Activated T-helper 2 cell treated with anti-CD3 and anti-CD28 coated beads, Interferon-gamma antibody, Interleukin-2, Interleukin-4, amounts not matched to agents 10 μg/mL and 5 μg/mL and 100 μg/mL, durations not matched to agents 14 hours and 24 hours and 36 hours (primary cell): ENCODE measurements at regions of chr2 and their contacts with region 1.

Region 1: DNA sequence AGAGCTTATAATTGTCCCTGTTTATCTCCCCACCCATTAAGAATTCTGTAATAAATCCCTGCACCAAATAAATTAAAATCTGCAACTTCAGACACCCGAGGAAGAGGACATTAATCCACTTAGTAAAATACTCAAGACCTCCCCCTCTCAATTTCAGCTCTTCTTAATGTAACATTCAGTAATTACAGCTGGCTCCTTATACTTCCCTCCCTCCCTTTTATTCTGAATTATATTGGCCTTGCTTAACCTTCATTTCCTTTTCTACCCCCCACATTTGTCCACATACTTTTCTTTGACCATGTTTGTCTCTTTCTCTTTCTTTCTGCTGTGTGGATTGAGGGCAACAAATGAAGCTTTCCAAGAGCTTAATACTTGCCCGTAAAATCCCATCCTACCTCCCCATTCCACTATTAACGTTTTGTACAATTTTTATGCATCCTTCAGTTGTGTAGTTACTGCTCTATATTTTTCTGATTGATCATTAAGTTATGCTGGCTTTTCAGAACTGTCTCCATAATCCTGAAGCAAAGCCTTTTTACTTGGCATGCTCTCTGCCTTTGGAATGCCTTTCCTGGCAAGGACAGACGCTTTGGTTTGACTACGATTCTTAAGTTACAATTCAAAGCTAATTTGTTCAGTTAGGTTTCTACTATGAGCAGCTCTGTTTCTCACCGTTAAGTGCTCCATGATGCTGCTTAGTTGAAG is 580.1 kb downstream of the ZEB2 start:
- DNase-seq: no peak
- H3K4me3 Mint-ChIP-seq: no peak overlapping the region
- H3K27ac Mint-ChIP-seq: no peak overlapping the region
- H3K4me1 Mint-ChIP-seq: peaks cover 9% of the 10 kb centered on the region
- H3K27me3 Mint-ChIP-seq: peaks cover 44% of the 10 kb centered on the region

Region 2: DNA sequence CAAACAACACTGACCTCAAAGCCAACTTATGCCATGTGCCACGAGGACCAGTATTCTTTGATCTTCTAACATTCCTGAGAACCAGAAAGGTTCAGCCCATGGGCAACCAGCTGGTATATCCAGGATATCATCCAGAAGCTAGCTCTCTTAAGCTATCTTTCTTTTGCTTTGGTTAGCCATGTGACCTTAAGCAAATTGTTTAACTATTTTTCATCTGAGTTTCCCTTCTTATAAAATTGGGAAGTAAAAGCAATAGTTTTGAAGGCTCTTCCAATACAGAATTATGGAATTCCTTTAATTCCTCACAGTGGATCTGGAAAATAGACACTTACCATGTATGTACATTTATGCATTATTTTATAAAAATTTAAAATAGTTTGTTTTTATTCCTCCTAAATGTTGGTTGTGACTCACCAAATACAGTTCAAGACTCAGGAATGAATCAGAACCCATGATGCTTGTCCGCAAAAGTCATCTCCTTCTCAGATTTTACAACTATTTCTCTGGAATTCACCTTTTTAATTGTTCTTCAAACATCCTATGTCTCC is 144.4 kb after region 1 on chr2:
- intact Hi-C with region 1: loop called (anchors 10 kb)
- DNase-seq: no peak
- H3K4me3 Mint-ChIP-seq: no peak overlapping the region
- H3K27ac Mint-ChIP-seq: peak overlapping the region; percentile 23
- H3K4me1 Mint-ChIP-seq: peaks cover 31% of the 10 kb centered on the region
- H3K27me3 Mint-ChIP-seq: no peaks in the 10 kb centered on the region

Region 3: GRCh38 chr2:144131042-144131441 is 191.3 kb after region 1 on chr2:
- intact Hi-C with region 1: no loop called
- DNase-seq: no peak
- H3K4me3 Mint-ChIP-seq: no peak overlapping the region
- H3K27ac Mint-ChIP-seq: no peak overlapping the region
- H3K4me1 Mint-ChIP-seq: peaks cover 35% of the 10 kb centered on the region
- H3K27me3 Mint-ChIP-seq: no peaks in the 10 kb centered on the region